Gastrocnemius medialis (tissue), 4 donors: ENCODE measurements at regions of chr15 and their contacts with region 1.

Region 1: DNA sequence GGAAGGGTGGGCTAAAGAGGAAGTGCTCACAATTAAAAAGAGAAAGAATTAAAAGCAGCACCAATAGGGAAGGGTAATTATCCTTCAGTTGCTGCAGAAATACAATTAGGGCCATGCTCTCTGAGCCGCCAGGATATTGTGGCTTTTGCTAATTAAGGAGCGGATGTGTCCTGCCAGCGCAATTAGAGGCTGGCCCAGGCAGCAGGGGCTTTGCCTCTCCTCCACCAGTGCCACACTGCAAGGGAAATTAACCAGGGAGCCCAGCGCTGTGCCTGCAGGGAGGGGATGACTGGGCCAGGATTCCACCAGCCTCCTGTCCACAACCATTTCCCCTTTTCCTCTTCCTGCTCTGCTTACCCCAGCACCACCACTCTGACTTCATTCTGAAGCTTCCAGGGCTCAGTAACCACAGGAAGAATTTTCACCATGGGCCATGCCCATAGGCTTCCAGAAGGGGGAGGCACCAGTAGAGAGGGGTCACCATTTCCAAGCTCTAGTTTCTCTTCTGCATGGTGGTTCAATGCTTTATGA is 10.4 kb upstream of the AEN start:
- DNase-seq: no peak
- ATAC-seq: no peak
- H3K4me3 ChIP-seq: no peak overlapping the region
- H3K27ac ChIP-seq: no peak overlapping the region
- H3K4me1 ChIP-seq: peaks cover 2 to 3% of the 10 kb centered on the region in 2 donors
- H3K27me3 ChIP-seq: peaks cover 11 to 15% (median 14%) of the 10 kb centered on the region in 3 donors
- CTCF ChIP-seq: no peak
- POLR2A ChIP-seq: no peak

Region 2: GRCh38 chr15:88467073-88467934 is 143.5 kb before region 1 on chr15 and contains the starts of genes MRPL46 and MRPS11:
- in situ Hi-C with region 1: loop called in 2 of 4 experiments (anchors 10 kb)
- intact Hi-C with region 1: loop called (anchors 2 kb)
- DNase-seq: peak; percentile 76 to 83
- ATAC-seq: peak; percentile 98
- H3K4me3 ChIP-seq: peak within 1 kb of the TSS; percentile 87 to 99 (median 94)
- H3K27ac ChIP-seq: peak within 1 kb of the TSS; percentile 90 to 98 (median 94)
- H3K4me1 ChIP-seq: peaks cover 28 to 34% of the 10 kb centered on the region in 2 donors
- H3K27me3 ChIP-seq: no peaks in the 10 kb centered on the region
- CTCF ChIP-seq: no peak
- POLR2A ChIP-seq: peak; percentile 17 to 44
- total RNA-seq, gene MRPL46: 36.2 to 48.9 (median 44.6) TPM
- total RNA-seq, gene MRPS11: 33.5 to 47.8 (median 45.2) TPM

Region 3: GRCh38 chr15:88476635-88477060 is 134.1 kb before region 1 on chr15:
- in situ Hi-C with region 1: loop called in 3 of 4 experiments (anchors 10 to 25 kb)
- intact Hi-C with region 1: loop called (anchors 1 kb)
- DNase-seq: no peak
- ATAC-seq: peak in 1 of 2 donors; percentile 61
- H3K4me3 ChIP-seq: no peak overlapping the region
- H3K27ac ChIP-seq: no peak overlapping the region
- H3K4me1 ChIP-seq: no peaks in the 10 kb centered on the region
- H3K27me3 ChIP-seq: no peaks in the 10 kb centered on the region
- CTCF ChIP-seq: peak in 4 of 5 experiments; percentile 11 to 44 (median 37)
- POLR2A ChIP-seq: no peak

Region 4: DNA sequence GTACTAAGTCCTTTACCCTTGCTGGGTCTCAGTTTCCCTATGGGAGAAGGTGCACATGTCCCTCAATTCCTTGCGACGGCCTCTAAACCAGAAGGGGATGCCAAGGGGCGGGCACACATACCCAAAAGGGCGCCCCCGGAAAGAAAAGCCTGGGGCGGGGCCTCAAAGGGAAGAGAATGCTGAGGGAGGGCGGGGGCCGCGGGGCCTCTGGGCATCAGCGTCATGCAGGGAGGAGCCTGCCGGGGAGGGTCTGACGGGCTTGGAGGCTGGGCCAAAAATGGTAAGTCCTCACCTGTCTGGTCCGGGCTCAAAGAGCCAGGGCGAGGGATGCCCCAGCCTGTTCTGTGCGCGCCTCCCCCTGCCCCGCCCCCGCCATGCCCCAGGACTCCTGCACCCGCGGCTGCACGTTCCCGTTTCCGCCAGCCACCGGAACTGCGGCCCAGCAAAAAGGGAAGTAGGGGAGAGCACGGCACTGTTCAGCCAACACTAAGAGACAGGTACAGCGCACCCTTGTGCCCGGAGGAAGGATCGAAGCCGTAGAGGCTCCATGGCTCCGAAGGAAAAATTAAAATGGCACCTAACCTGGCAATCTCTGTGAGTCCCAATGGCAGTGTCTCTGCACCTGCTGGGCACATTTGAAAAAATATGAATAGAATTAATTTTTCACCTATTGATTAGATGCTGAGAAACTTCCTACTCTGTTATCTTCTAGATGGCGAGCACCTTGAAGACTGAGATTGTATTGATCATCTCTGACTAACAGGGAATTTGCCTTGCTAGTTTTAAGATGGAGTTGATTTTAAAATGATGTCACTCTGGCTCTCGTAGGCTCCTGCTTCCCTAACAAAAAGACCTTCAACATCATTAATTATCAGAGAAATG is 64.3 kb before region 1 on chr15 and contains the start of gene DET1:
- in situ Hi-C with region 1: no loop called
- intact Hi-C with region 1: loop called (anchors 5 kb)
- DNase-seq: peak; percentile 91 to 94
- ATAC-seq: peak; percentile 99 to 100
- H3K4me3 ChIP-seq: peak within 1 kb of the TSS; percentile 82 to 91 (median 88)
- H3K27ac ChIP-seq: peak within 1 kb of the TSS; percentile 83 to 93 (median 86)
- H3K4me1 ChIP-seq: peaks cover 26 to 29% of the 10 kb centered on the region in 2 donors
- H3K27me3 ChIP-seq: no peaks in the 10 kb centered on the region
- CTCF ChIP-seq: peak; percentile 25 to 88 (median 62)
- POLR2A ChIP-seq: no peak
- total RNA-seq, gene DET1: 4.1 to 8.4 (median 6.4) TPM

Region 5: GRCh38 chr15:88701561-88702095 is 90.9 kb after region 1 on chr15:
- in situ Hi-C with region 1: no loop called
- intact Hi-C with region 1: no loop called
- DNase-seq: no peak
- ATAC-seq: no peak
- H3K4me3 ChIP-seq: no peak overlapping the region
- H3K27ac ChIP-seq: no peak overlapping the region
- H3K4me1 ChIP-seq: peaks cover 3 to 9% of the 10 kb centered on the region in 2 donors
- H3K27me3 ChIP-seq: peaks cover 0 to 11% (median 4%) of the 10 kb centered on the region in 3 donors
- CTCF ChIP-seq: no peak
- POLR2A ChIP-seq: no peak